Dendritic cell treated with granulocyte-macrophage colony-stimulating factor and Interleukin-4, amounts not matched to agents 40 ng/mL and 50 ng/mL, for 4 days (primary cell): ENCODE measurements at regions of chr12 and their contacts with region 1.

Region 1: DNA sequence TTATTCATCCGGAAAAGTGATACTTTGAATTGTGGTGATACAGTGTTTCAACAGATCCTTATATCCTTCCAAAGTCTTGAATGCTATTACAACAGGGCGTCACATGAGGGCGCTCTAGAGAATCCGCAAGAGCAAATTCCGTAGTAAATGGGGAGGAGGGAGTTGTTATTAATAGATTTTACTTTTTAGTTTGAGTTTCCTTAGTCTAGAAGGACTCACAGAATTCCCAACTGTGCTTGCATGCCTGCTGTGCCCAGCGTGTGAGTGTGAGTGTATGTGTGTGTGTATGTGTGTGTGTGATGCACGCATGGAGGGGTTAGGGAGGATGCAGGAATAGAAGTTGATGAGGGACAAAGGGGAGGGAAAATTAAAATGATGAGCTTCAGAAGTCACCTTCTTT is 375.3 kb downstream of the C12orf75 start:
- H3K4me3 Mint-ChIP-seq: no peak overlapping the region
- H3K27ac Mint-ChIP-seq: no peak overlapping the region
- H3K4me1 Mint-ChIP-seq: no peaks in the 10 kb centered on the region
- H3K27me3 Mint-ChIP-seq: peaks cover 3% of the 10 kb centered on the region

Region 2: DNA sequence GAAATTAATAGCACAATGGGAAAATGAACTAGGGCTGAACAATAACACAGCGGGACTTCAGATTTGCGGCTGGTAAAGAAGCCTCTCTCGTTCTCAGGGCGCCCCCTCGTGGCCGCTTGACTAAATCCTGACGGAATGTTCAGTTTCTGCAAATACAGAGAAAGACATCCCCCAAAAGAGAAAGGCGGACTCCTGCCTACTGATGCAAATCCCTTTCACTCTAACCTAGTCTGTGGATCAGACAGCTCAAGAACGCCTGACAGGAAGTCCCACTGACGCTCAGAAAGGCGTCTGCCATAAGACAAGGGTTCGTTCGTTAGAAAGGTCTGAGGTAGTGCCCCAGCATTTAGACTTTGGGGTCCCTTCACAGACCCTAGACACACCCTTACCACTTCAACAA is 430.5 kb after region 1 on chr12:
- intact Hi-C with region 1: loop called (anchors 2 kb)
- H3K4me3 Mint-ChIP-seq: no peak overlapping the region
- H3K27ac Mint-ChIP-seq: no peak overlapping the region
- H3K4me1 Mint-ChIP-seq: no peaks in the 10 kb centered on the region
- H3K27me3 Mint-ChIP-seq: peaks cover 68% of the 10 kb centered on the region